MCF 10A (cell line): ENCODE measurements at regions of chr14 and their contacts with region 1.

Region 1: DNA sequence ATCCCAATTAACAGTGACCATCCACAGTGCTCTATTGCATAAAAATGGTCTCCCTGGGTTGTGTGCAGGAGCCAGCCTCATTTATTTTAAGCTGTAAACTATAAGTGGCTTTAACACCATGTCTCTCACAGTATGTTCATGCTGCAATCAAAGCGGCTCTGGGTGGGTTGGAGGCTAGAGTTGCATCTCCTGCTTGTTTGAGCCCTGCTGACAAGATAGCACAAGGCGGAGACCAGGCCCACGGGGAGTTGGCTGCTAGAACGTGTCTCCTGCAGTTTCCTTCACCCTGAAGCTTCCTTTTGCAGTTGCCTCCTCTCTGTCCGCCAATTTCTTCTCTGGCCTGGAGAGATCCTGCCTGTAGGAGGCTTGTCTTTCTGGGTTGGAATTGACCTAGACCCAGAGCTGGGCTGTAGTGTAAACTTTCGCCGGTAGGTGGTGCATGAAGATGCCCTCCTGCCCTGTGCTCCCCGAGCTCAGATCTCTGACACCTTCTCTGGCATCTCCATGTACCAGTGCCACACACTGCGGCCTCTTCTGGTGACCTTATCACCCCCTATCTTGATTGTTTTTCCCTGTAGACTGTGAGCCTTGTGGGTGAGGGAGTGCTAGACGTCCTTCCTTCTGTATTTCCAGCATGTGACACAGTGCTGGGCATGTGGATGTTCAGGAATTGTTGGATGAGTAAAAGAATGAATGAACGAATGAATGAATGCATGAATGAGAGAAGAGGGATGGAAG is 10.3 kb downstream of the OTUB2 start:
- DNase-seq: peak; percentile 79
- H3K4me3 Mint-ChIP-seq: no peak overlapping the region
- H3K27ac Mint-ChIP-seq: no peak overlapping the region
- H3K4me1 Mint-ChIP-seq: peaks cover 5% of the 10 kb centered on the region
- H3K27me3 Mint-ChIP-seq: no peaks in the 10 kb centered on the region
- CTCF ChIP-seq: peak; percentile 74

Region 2: GRCh38 chr14:94026173-94026888 is 10.2 kb before region 1 on chr14 and contains the start of gene OTUB2:
- CTCF ChIA-PET with region 1: interaction called, 21 read pairs
- POLR2A ChIA-PET with region 1: interaction called, 3 read pairs
- intact Hi-C with region 1: no loop called
- DNase-seq: peak; percentile 99
- H3K4me3 Mint-ChIP-seq: peak within 1 kb of the TSS; percentile 52
- H3K27ac Mint-ChIP-seq: no peak within 1 kb of the TSS
- H3K4me1 Mint-ChIP-seq: peaks cover 18% of the 10 kb centered on the region
- H3K27me3 Mint-ChIP-seq: no peaks in the 10 kb centered on the region
- CTCF ChIP-seq: no peak
- total RNA-seq, gene OTUB2: 1.2 and 1.8 TPM in 2 replicates

Region 3: DNA sequence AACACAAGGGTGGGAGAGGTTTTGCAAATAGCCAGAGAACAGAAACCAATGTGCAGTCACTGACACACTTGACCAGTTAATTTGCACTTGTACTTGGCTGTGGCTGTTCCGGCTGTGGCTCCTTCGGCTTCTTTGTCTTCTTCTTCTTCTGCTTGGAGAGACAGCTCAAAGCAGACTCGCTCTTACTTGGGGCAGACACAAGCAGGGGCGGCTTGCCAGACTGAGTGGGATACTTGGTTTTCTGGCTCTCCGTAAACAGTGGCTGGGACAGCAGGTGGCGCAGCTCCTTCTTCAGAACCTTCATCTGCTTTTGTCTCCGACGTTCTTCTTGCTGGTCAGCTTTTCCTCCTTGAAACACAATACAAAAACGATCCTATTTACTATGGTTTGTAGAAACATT is 14.6 kb after region 1 on chr14:
- CTCF ChIA-PET with region 1: interaction called, 27 read pairs
- POLR2A ChIA-PET with region 1: no interaction called
- intact Hi-C with region 1: no loop called
- DNase-seq: peak; percentile 28
- H3K4me3 Mint-ChIP-seq: no peak overlapping the region
- H3K27ac Mint-ChIP-seq: no peak overlapping the region
- H3K4me1 Mint-ChIP-seq: no peaks in the 10 kb centered on the region
- H3K27me3 Mint-ChIP-seq: no peaks in the 10 kb centered on the region
- CTCF ChIP-seq: peak; percentile 32

Region 4: DNA sequence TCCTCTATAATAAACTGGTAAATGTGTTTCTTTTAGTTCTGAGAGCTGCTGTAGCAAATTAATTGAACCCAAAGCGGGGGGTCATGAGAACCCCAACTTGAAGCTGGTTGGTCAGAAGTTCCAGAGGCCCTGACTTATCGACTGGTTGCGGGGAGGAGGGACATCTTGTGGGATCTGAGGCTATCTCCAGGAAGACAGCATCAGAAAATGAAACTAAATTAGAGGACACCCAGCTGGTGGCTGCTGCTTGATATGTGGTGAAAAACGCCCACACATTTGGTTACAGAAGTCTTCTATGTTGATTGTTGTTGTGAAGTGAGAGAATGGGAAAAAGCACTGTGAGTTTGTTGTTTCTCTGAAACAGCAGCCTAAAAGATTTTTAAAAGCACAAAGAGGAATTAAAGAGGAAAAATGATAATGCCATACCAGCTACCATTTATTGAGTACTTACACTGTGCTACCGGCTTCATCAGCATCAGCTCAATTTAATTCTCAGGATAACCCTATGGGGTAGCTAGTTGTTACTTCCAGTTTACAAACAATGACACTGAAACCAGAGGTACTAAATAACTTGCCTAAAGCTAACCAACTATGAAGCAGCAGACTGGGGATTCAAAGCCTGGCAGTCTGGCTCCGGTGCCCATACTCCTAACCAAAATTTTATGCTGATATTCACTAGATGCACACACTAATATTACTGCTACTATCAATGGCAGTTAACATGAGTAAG is 20.3 kb after region 1 on chr14:
- CTCF ChIA-PET with region 1: interaction called, 18 read pairs
- POLR2A ChIA-PET with region 1: no interaction called
- intact Hi-C with region 1: no loop called
- DNase-seq: no peak
- H3K4me3 Mint-ChIP-seq: no peak overlapping the region
- H3K27ac Mint-ChIP-seq: no peak overlapping the region
- H3K4me1 Mint-ChIP-seq: no peaks in the 10 kb centered on the region
- H3K27me3 Mint-ChIP-seq: no peaks in the 10 kb centered on the region
- CTCF ChIP-seq: no peak

Region 5: DNA sequence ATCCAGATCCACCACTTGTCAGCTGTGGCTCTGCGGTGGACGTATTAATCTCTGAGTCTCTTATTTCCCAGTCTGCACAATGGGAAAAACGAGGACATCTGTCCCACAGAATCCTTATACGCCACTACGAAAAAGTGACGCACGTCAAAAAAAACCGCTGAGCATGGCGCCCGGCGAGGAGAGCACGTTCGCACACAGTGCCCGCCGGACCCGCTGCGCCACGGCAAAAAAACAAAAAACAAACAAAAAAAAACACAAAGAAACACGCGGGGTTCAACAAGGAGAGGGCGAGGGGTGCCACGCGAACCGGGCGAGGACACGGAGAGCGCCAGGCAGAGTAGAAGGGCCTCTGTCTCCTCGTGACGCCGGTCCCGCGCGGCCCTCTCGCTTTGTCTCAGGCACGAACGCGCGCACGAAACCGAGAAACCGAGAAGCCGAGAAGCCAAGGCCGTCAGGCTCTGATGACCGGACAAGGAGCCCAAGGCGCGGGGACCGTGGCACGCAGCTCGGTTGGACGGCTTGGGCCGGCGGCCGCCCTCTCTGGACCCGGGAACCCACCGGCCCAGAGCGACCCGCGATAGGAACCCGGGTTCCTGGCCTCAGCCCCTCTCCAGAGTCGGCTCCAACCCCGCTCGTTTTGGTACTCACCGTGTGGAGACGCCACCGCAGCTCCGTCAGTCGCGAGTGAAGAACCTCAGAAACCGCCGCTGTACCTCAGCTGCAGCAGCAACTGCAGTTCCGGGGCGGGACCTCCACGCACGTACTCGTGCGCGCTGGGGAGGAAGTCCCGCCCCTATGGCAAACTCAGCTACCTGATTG is 44.2 kb after region 1 on chr14 and contains the start of gene DDX24:
- CTCF ChIA-PET with region 1: interaction called, 6 read pairs
- POLR2A ChIA-PET with region 1: interaction called, 12 read pairs
- intact Hi-C with region 1: no loop called
- DNase-seq: peak; percentile 91
- H3K4me3 Mint-ChIP-seq: peak within 1 kb of the TSS; percentile 95
- H3K27ac Mint-ChIP-seq: peak within 1 kb of the TSS; percentile 99
- H3K4me1 Mint-ChIP-seq: peaks cover 34% of the 10 kb centered on the region
- H3K27me3 Mint-ChIP-seq: no peaks in the 10 kb centered on the region
- CTCF ChIP-seq: no peak
- total RNA-seq, gene DDX24: 126 and 135 TPM in 2 replicates

Region 6: GRCh38 chr14:94129111-94129757 is 92.8 kb after region 1 on chr14 and contains the start of gene IFI27L2:
- CTCF ChIA-PET with region 1: interaction called, 25 read pairs
- POLR2A ChIA-PET with region 1: no interaction called
- intact Hi-C with region 1: loop called (anchors 1 kb)
- DNase-seq: peak; percentile 86
- H3K4me3 Mint-ChIP-seq: peak within 1 kb of the TSS; percentile 80
- H3K27ac Mint-ChIP-seq: peak within 1 kb of the TSS; percentile 43
- H3K4me1 Mint-ChIP-seq: peaks cover 9% of the 10 kb centered on the region
- H3K27me3 Mint-ChIP-seq: no peaks in the 10 kb centered on the region
- CTCF ChIP-seq: peak; percentile 26
- total RNA-seq, gene IFI27L2: 44.3 and 59.3 TPM in 2 replicates

Region 7: DNA sequence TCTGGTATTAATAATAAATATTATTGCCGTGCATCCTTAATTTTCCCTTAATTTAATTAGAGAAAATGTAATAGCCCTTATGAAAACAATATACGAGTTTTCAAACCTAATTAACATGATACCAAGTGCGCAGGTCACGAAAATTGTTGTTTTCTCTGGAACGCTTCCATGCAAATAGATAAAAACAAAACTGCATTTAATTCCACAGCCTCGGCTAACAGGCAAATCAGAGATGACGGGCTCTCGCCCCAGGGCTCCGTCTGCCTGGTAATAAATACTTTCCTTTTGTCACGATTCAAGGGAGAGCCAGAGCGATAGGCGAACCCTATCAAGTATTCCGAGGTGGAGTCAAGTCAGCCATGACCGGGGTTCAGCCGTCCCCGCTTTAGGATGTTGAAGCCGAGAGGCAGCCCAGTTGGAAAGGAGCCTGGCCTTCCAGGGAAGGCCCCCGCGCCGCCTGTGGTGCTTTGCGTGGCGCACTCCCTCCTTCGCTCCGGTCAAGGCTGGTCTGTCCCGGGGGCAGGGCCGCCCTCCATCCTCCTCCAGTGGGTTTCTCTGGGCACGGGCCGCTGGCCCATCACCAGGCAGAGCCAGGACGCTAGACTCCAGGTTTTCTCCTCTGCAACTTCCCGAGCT is 871.3 kb after region 1 on chr14:
- CTCF ChIA-PET with region 1: no interaction called
- POLR2A ChIA-PET with region 1: no interaction called
- intact Hi-C with region 1: no loop called
- DNase-seq: no peak
- H3K4me3 Mint-ChIP-seq: no peak overlapping the region
- H3K27ac Mint-ChIP-seq: no peak overlapping the region
- H3K4me1 Mint-ChIP-seq: no peaks in the 10 kb centered on the region
- H3K27me3 Mint-ChIP-seq: peaks cover 46% of the 10 kb centered on the region
- CTCF ChIP-seq: no peak